GM12878 (cell line): ENCODE measurements at regions of chr5 and their contacts with region 1.

Region 1: GRCh38 chr5:75869889-75870288 is 152.7 kb upstream of the POC5 start:
- DNase-seq: no peak
- ATAC-seq: no peak
- H3K4me3 ChIP-seq: no peak overlapping the region
- H3K27ac ChIP-seq: no peak overlapping the region
- H3K4me1 ChIP-seq: no peaks in the 10 kb centered on the region
- H3K27me3 ChIP-seq: no peaks in the 10 kb centered on the region
- CTCF ChIP-seq: no peak
- EP300 ChIP-seq: no peak
- POLR2A ChIP-seq: no peak
- RAD21 ChIP-seq: no peak

Region 2: DNA sequence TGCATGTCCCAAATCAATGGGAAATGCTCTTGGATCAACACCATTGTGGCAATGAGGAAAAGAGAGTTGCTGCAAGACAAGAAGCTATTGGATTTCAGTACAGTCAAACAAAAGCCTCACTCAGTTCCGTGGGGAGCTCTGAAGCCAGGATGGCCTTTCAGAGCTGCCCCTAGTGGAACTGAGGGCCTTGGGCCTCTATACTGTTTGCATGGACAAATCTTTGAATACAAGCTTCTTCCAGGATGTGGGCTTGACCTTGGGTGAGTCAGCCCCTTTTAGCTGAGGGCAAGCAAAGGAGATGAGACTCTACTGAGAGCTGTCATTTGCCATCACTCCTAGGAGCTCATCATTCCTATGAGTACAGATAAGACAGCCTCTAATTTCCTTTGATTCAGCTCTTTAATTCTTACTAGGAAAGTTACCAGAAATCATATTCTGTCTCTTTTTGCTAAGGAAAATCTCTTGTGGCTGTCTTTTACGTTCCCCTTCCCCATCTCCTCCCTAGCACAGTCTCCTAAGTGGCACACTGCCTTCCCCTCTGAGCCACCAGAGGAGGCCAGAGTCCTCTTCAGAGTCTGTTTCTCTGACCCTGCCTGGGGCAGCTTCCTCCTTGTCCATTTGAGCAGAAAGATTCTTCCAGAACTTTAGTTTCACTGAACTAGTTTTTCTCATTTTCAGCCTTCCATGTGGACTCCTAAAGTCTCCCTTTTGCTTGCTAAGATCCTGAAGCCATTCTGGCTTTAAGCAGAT is 16.1 kb after region 1 on chr5:
- CTCF ChIA-PET with region 1: interaction called, 13 read pairs
- POLR2A ChIA-PET with region 1: no interaction called
- RAD21 ChIA-PET with region 1: no interaction called
- SMC1A ChIA-PET with region 1: interaction called, 3 read pairs
- in situ Hi-C with region 1: no loop called
- intact Hi-C with region 1: no loop called
- DNase-seq: no peak
- ATAC-seq: peak; percentile 73
- H3K4me3 ChIP-seq: no peak overlapping the region
- H3K27ac ChIP-seq: no peak overlapping the region
- H3K4me1 ChIP-seq: no peaks in the 10 kb centered on the region
- H3K27me3 ChIP-seq: no peaks in the 10 kb centered on the region
- CTCF ChIP-seq: peak; percentile 48 to 66 (median 62)
- EP300 ChIP-seq: no peak
- POLR2A ChIP-seq: no peak
- RAD21 ChIP-seq: peak; percentile 83